GM12878 (cell line): ENCODE measurements at regions of chr9 and their contacts with region 1.

Region 1: DNA sequence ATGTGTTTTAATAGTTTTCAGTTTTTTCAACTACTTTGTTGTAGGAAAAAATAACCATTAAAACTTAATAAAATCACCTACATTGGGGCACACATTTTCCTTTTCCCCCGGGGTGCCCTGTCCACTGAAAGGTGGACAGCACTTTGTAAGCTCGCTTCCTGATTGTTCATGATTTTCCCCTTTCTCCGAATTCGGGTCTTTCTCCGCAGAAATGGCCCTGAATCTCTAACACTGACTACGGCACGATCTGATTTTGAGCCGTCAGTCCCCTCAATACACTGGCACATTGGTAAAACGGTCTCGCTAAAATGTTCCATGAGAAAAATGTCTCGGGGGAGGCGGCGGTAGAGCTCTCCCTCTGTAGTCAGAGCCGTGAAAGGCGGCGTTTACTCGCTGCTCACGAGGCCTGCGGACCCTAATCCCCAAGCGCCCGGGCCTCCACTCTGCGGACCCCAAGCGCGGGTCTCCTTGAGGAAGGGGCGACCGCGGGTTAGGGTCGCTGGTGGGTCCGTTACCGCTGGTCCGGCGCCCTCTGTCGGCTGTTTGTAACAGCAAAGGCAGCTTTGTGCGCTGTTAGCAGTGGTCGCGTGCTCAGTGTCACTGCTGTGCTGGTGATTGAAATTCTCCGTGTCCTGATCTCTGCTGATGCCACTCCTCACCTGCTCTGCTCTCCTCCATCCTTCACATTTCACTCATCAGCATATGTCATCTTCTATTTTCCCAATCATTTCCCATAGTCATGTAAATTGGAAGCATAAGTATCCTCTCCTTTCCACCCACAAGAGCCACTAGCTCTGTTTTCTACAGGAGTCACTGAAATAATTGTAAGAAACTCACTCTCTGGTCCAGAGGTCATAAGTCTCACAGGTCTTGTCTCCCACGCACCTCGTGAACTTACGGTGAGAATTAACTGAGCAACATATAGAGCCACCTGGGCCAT is 10.8 kb upstream of the IFNA2 start:
- DNase-seq: no peak
- ATAC-seq: peak; percentile 82
- H3K4me3 ChIP-seq: peak overlapping the region; percentile 68
- H3K27ac ChIP-seq: no peak overlapping the region
- H3K4me1 ChIP-seq: peaks cover 3% of the 10 kb centered on the region; the same call in 1 of the 2 replicates
- H3K27me3 ChIP-seq: no peaks in the 10 kb centered on the region
- CTCF ChIP-seq: peak; percentile 71 to 88 (median 85)
- EP300 ChIP-seq: no peak
- POLR2A ChIP-seq: no peak
- RAD21 ChIP-seq: peak; percentile 57

Region 2: GRCh38 chr9:21252721-21253547 is 143.1 kb before region 1 on chr9:
- CTCF ChIA-PET with region 1: interaction called, 22 read pairs
- POLR2A ChIA-PET with region 1: no interaction called
- RAD21 ChIA-PET with region 1: interaction called, 4 read pairs
- SMC1A ChIA-PET with region 1: interaction called, 9 read pairs
- in situ Hi-C with region 1: no loop called
- intact Hi-C with region 1: no loop called
- DNase-seq: no peak
- ATAC-seq: peak; percentile 91
- H3K4me3 ChIP-seq: no peak overlapping the region
- H3K27ac ChIP-seq: no peak overlapping the region
- H3K4me1 ChIP-seq: no peaks in the 10 kb centered on the region
- H3K27me3 ChIP-seq: no peaks in the 10 kb centered on the region; a peak in 3 of 4 replicates
- CTCF ChIP-seq: peak; percentile 60 to 63 (median 62)
- EP300 ChIP-seq: no peak
- POLR2A ChIP-seq: no peak
- RAD21 ChIP-seq: peak; percentile 62

Region 3: DNA sequence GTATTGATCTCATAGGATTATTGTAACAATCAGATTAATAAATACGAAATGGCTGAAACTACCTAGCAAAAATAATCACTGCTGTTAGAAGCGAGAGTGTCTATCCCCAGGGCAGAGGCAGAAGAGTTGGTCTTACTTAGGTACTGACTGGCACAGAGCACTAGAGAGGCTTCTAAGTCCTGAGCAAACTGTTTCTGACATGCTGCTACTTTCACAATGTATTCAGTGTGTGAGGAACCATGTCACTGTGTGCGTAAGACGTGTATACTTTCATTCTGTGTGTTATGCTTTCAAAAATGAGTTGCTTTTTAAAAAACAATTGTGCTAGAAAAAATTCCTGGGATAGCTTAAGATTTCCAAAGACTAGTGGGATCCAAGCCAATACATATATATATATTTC is 55.3 kb before region 1 on chr9:
- CTCF ChIA-PET with region 1: interaction called, 256 read pairs
- POLR2A ChIA-PET with region 1: no interaction called
- RAD21 ChIA-PET with region 1: interaction called, 44 read pairs
- SMC1A ChIA-PET with region 1: interaction called, 205 read pairs
- in situ Hi-C with region 1: no loop called
- intact Hi-C with region 1: no loop called
- DNase-seq: no peak
- ATAC-seq: peak; percentile 63
- H3K4me3 ChIP-seq: no peak overlapping the region
- H3K27ac ChIP-seq: no peak overlapping the region
- H3K4me1 ChIP-seq: no peaks in the 10 kb centered on the region
- H3K27me3 ChIP-seq: no peaks in the 10 kb centered on the region
- CTCF ChIP-seq: no peak
- EP300 ChIP-seq: no peak
- POLR2A ChIP-seq: no peak
- RAD21 ChIP-seq: no peak

Region 4: GRCh38 chr9:21357479-21358460 is 38.3 kb before region 1 on chr9:
- CTCF ChIA-PET with region 1: interaction called, 18 read pairs
- POLR2A ChIA-PET with region 1: no interaction called
- RAD21 ChIA-PET with region 1: interaction called, 12 read pairs
- SMC1A ChIA-PET with region 1: interaction called, 7 read pairs
- in situ Hi-C with region 1: no loop called
- intact Hi-C with region 1: no loop called
- DNase-seq: peak; percentile 76
- ATAC-seq: peak; percentile 94
- H3K4me3 ChIP-seq: no peak overlapping the region
- H3K27ac ChIP-seq: peak overlapping the region; percentile 45; the same call in 1 of the 2 replicates
- H3K4me1 ChIP-seq: peaks cover 18% of the 10 kb centered on the region; the same call in 1 of the 2 replicates
- H3K27me3 ChIP-seq: no peaks in the 10 kb centered on the region
- CTCF ChIP-seq: no peak
- EP300 ChIP-seq: peak in 1 of 2 experiments; percentile 62; a peak in 1 of 4 replicates
- POLR2A ChIP-seq: no peak
- RAD21 ChIP-seq: no peak

Region 5: DNA sequence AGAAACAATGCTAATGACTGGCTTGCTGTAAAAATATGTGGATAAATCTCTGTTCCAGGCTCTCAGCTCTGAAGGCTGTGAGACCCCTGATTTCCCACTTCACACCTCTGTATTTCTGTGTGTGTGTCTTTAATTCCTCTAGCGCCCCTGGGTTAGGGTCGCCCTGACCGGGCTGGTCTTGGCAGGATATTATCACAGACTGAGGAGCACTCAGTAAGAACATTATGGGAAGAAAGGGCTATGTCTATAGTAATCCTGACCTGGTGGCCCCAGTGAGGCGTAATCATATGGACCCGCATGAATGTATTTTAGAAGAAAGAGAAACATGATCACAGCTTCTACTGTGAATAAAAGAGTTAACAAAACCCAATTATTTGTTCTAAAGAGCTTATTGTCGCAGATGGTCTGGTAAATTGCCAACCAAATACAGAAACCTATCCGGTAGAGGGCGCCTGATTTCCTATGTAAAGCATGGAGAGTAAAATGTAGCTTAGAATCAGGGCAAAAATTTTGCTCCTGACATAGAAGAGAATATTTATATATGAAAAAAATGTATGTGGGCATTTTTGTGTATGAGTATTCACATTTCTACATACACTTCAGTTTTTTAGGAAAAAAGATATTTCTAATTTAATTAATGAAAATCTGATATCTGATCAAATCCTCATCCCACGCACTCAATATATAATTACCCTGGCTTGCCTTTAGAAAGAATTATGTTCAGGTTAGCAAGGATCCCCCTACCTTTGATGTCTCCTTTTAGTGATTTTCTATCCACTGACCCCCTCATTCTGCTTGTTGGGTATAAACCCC is 38.4 kb after region 1 on chr9:
- CTCF ChIA-PET with region 1: interaction called, 22 read pairs
- POLR2A ChIA-PET with region 1: no interaction called
- RAD21 ChIA-PET with region 1: interaction called, 3 read pairs
- SMC1A ChIA-PET with region 1: interaction called, 13 read pairs
- in situ Hi-C with region 1: no loop called
- intact Hi-C with region 1: no loop called
- DNase-seq: no peak
- ATAC-seq: peak; percentile 47; the same call in 1 of the 3 replicates
- H3K4me3 ChIP-seq: no peak overlapping the region
- H3K27ac ChIP-seq: no peak overlapping the region
- H3K4me1 ChIP-seq: peaks cover 6% of the 10 kb centered on the region; the same call in 1 of the 2 replicates
- H3K27me3 ChIP-seq: no peaks in the 10 kb centered on the region
- CTCF ChIP-seq: peak; percentile 46 to 51 (median 49); a peak in 5 of 6 replicates
- EP300 ChIP-seq: no peak
- POLR2A ChIP-seq: no peak
- RAD21 ChIP-seq: peak; percentile 38

Region 6: GRCh38 chr9:21491742-21492141 is 95.7 kb after region 1 on chr9:
- CTCF ChIA-PET with region 1: no interaction called
- POLR2A ChIA-PET with region 1: no interaction called
- RAD21 ChIA-PET with region 1: no interaction called
- SMC1A ChIA-PET with region 1: no interaction called
- in situ Hi-C with region 1: no loop called
- intact Hi-C with region 1: no loop called
- DNase-seq: no peak
- ATAC-seq: no peak
- H3K4me3 ChIP-seq: no peak overlapping the region
- H3K27ac ChIP-seq: no peak overlapping the region
- H3K4me1 ChIP-seq: no peaks in the 10 kb centered on the region
- H3K27me3 ChIP-seq: no peaks in the 10 kb centered on the region
- CTCF ChIP-seq: no peak
- EP300 ChIP-seq: no peak
- POLR2A ChIP-seq: no peak
- RAD21 ChIP-seq: no peak

Region 7: GRCh38 chr9:21777701-21778100 is 381.7 kb after region 1 on chr9:
- CTCF ChIA-PET with region 1: no interaction called
- POLR2A ChIA-PET with region 1: no interaction called
- RAD21 ChIA-PET with region 1: no interaction called
- SMC1A ChIA-PET with region 1: no interaction called
- in situ Hi-C with region 1: no loop called
- intact Hi-C with region 1: no loop called
- DNase-seq: no peak
- ATAC-seq: no peak
- H3K4me3 ChIP-seq: no peak overlapping the region
- H3K27ac ChIP-seq: no peak overlapping the region
- H3K4me1 ChIP-seq: no peaks in the 10 kb centered on the region
- H3K27me3 ChIP-seq: peaks cover 0 to 1% of the 10 kb centered on the region in 2 experiments; a peak in 1 of 4 replicates
- CTCF ChIP-seq: no peak
- EP300 ChIP-seq: no peak
- POLR2A ChIP-seq: no peak
- RAD21 ChIP-seq: no peak